ENCODE measurements at regions of chr5 and their contacts with region 1.

Region 1: GRCh38 chr5:36459176-36460135 is 146.9 kb upstream of the SLC1A3 start:
- DNase-seq: no peak
- H3K4me3 ChIP-seq: no peak overlapping the region
- H3K27ac ChIP-seq: no peak overlapping the region
- H3K4me1 ChIP-seq: no peaks in the 10 kb centered on the region
- H3K27me3 ChIP-seq: no peaks in the 10 kb centered on the region
- CTCF ChIP-seq: no peak
- EP300 ChIP-seq: no peak
- POLR2A ChIP-seq: no peak

Region 2: GRCh38 chr5:36281626-36282025 is 177.8 kb before region 1 on chr5:
- intact Hi-C with region 1: loop called in 1 of 4 experiments (anchors 5 kb)
- DNase-seq: no peak
- H3K4me3 ChIP-seq: no peak overlapping the region
- H3K27ac ChIP-seq: no peak overlapping the region
- H3K4me1 ChIP-seq: peaks cover 4% of the 10 kb centered on the region
- H3K27me3 ChIP-seq: no peaks in the 10 kb centered on the region
- CTCF ChIP-seq: no peak
- EP300 ChIP-seq: no peak
- POLR2A ChIP-seq: no peak

Region 3: GRCh38 chr5:36683821-36684434 is 224.5 kb after region 1 on chr5:
- intact Hi-C with region 1: no loop called
- DNase-seq: no peak
- H3K4me3 ChIP-seq: no peak overlapping the region
- H3K27ac ChIP-seq: no peak overlapping the region
- H3K4me1 ChIP-seq: no peaks in the 10 kb centered on the region
- H3K27me3 ChIP-seq: no peaks in the 10 kb centered on the region
- CTCF ChIP-seq: no peak
- EP300 ChIP-seq: no peak
- POLR2A ChIP-seq: no peak

Region 4: DNA sequence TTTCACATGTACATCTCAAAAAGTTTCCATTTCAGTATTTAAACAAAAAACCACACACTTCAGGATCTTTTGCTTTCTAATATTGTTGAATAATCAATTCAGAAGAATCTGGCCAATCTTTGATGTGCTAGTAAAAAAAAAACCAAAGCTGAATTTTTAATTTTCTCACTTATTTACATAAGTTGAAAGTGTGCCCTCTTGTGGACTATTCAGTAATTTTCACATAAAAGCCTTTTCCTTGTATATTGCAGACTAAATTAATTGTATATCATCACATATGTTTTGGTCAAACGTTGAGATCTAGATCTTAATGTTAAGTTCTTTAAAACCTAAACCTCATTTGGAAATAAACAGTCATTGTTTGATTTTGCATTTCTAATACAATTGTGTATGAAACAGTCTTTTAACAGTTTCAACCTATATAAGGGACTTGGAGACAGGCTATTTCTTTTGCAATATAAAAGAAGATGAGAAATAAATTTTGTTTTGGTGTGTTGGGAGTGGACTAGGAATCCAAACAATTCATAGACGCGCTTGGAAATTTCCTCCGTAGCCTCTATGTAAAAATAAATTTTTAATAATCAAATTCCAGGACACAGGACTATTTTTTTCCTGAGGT is 485.3 kb after region 1 on chr5:
- intact Hi-C with region 1: no loop called
- DNase-seq: no peak
- H3K4me3 ChIP-seq: no peak overlapping the region
- H3K27ac ChIP-seq: no peak overlapping the region
- H3K4me1 ChIP-seq: no peaks in the 10 kb centered on the region
- H3K27me3 ChIP-seq: no peaks in the 10 kb centered on the region
- CTCF ChIP-seq: no peak
- EP300 ChIP-seq: no peak
- POLR2A ChIP-seq: no peak